ENCODE measurements at regions of chr16 and their contacts with region 1.

Region 1: GRCh38 chr16:19555162-19555937 is at the start of gene VPS35L:
- DNase-seq: peak; percentile 97 to 98
- ATAC-seq: peak; percentile 99 to 100 (median 100)
- H3K4me3 ChIP-seq: peak within 1 kb of the TSS; percentile 62 to 93 (median 79)
- H3K27ac ChIP-seq: peak within 1 kb of the TSS; percentile 40 to 95 (median 86)
- H3K4me1 ChIP-seq: peaks cover 0 to 24% (median 16%) of the 10 kb centered on the region in 9 donors
- H3K27me3 ChIP-seq: no peaks in the 10 kb centered on the region
- CTCF ChIP-seq: peak; percentile 50 to 88 (median 76)
- total RNA-seq, gene VPS35L: 24.0 to 35.1 (median 32.0) TPM

Region 2: GRCh38 chr16:19521471-19522396 is 33.6 kb before region 1 on chr16 and contains the start of gene GDE1:
- intact Hi-C with region 1: loop called in 2 of 10 experiments (anchors 2 kb)
- DNase-seq: peak; percentile 95
- ATAC-seq: peak; percentile 91 to 95 (median 93)
- H3K4me3 ChIP-seq: peak within 1 kb of the TSS; percentile 70 to 92 (median 85)
- H3K27ac ChIP-seq: peak within 1 kb of the TSS; percentile 14 to 92 (median 88)
- H3K4me1 ChIP-seq: peaks cover 0 to 70% (median 30%) of the 10 kb centered on the region in 9 donors
- H3K27me3 ChIP-seq: no peaks in the 10 kb centered on the region
- CTCF ChIP-seq: peak in 7 of 9 donors; percentile 11 to 68 (median 53)
- total RNA-seq, gene GDE1: 82.6 to 128 (median 113) TPM

Region 3: GRCh38 chr16:19583665-19584300 is 28.4 kb after region 1 on chr16:
- intact Hi-C with region 1: no loop called
- DNase-seq: peak in 1 of 2 donors; percentile 23
- ATAC-seq: peak in 3 of 8 donors; percentile 38 to 54 (median 47)
- H3K4me3 ChIP-seq: no peak overlapping the region
- H3K27ac ChIP-seq: no peak overlapping the region
- H3K4me1 ChIP-seq: peaks cover 0 to 9% (median 0%) of the 10 kb centered on the region in 9 donors
- H3K27me3 ChIP-seq: no peaks in the 10 kb centered on the region
- CTCF ChIP-seq: peak; percentile 48 to 88 (median 82)